ENCODE measurements at regions of chr10 and their contacts with region 1.

Region 1: GRCh38 chr10:12710594-12711349 is 290.7 kb downstream of the CCDC3 start:
- DNase-seq: peak; percentile 76
- ATAC-seq: peak; percentile 65
- H3K4me3 ChIP-seq: no peak overlapping the region
- H3K27ac ChIP-seq: no peak overlapping the region
- H3K4me1 ChIP-seq: peaks cover 40 to 55% of the 10 kb centered on the region in 2 experiments
- H3K27me3 ChIP-seq: no peaks in the 10 kb centered on the region
- CTCF ChIP-seq: peak; percentile 78 to 97 (median 96)
- POLR2A ChIP-seq: no peak
- RAD21 ChIP-seq: peak; percentile 93

Region 2: DNA sequence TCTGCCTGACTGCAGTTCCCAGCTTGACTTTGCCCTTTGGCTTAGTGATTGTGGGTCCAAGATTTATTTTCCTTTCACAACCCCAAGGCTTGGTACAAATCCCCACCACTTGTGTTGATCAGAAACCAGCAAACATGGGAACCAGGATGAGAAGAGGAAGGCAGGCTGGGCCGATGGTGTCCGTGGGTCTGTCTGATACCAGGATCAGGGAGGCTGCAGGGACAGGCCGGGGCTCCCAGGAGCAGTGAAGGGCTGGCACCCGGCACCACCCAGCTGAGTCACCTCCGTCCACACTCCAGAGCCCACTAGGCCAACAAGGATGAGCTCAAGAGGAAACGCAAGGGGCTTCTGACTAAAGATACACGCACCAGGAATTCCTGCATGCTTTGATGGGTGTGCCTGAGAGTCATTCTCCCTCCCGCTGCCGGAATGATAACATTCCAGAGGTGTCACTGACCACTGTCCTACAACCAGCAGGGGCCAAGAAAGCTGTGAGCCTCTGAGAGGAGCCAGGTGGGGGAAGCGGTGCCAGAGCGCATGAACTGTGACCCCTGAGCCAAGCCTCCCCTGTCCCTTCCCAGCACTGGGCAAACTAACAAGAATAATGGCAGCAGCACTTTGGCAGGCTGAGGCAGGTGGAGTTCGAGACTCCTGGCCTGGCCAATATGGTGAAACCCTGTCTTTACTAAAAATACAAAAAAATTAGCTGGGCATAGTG is 916.9 kb before region 1 on chr10:
- CTCF ChIA-PET with region 1: no interaction called
- POLR2A ChIA-PET with region 1: no interaction called
- RAD21 ChIA-PET with region 1: no interaction called
- intact Hi-C with region 1: loop called (anchors 10 kb)
- DNase-seq: peak; percentile 86
- ATAC-seq: peak; percentile 86
- H3K4me3 ChIP-seq: peak overlapping the region; percentile 5 to 42
- H3K27ac ChIP-seq: peak overlapping the region; percentile 68
- H3K4me1 ChIP-seq: peaks cover 14 to 45% of the 10 kb centered on the region in 2 experiments
- H3K27me3 ChIP-seq: no peaks in the 10 kb centered on the region
- CTCF ChIP-seq: no peak; a peak in 1 of 6 replicates
- POLR2A ChIP-seq: no peak
- RAD21 ChIP-seq: no peak; the same call in 1 of the 2 replicates

Region 3: GRCh38 chr10:12214763-12215218 is 496.0 kb before region 1 on chr10:
- CTCF ChIA-PET with region 1: interaction called, 9 read pairs
- POLR2A ChIA-PET with region 1: interaction called, 3 read pairs
- RAD21 ChIA-PET with region 1: interaction called in 1 of 2 experiments, 3 read pairs
- intact Hi-C with region 1: loop called (anchors 5 kb)
- DNase-seq: no peak
- ATAC-seq: no peak
- H3K4me3 ChIP-seq: no peak overlapping the region
- H3K27ac ChIP-seq: no peak overlapping the region
- H3K4me1 ChIP-seq: no peaks in the 10 kb centered on the region; a peak in 1 of 4 replicates
- H3K27me3 ChIP-seq: no peaks in the 10 kb centered on the region
- CTCF ChIP-seq: peak; percentile 48 to 83 (median 64); a peak in 5 of 6 replicates
- POLR2A ChIP-seq: no peak
- RAD21 ChIP-seq: peak; percentile 54

Region 4: DNA sequence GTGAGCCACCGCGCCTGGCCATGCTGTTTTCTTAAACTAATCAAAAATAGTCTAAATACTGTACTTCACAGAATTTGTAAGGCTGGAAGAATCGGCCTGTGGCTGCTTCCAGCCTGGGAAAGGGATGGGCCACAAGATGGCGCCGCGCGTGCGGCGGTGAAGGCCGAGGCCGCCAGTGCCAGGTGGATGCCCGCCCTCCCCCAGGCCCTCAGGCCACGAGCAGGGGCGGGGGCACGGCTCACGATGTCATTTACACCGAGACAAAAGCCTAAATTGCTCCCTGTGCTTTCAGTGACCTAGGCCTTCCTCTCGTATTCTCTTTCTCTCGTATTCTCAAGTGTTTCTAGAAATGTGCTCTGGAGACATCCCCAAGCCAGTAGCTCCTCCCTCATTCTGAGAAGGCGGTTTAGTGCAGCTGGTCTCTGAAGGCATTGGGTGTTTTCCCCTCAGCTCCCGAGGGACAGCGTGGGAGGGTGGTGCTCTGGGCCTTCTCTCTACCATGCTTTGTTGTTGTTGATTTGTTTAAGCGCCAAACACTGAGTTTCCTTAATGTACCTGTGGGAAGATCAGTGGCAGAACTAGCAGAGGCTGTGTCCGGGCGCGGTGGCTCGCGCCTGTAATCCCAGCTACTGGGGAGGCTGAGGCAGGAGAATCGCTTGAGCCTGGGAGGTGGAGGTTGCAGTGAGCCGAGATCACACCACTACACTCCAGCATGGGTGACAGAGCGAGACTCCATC is 446.4 kb before region 1 on chr10:
- CTCF ChIA-PET with region 1: interaction called, 32 read pairs
- POLR2A ChIA-PET with region 1: interaction called, 3 read pairs
- RAD21 ChIA-PET with region 1: interaction called in 1 of 2 experiments, 5 read pairs
- intact Hi-C with region 1: loop called (anchors 1 kb)
- DNase-seq: peak; percentile 60
- ATAC-seq: peak; percentile 97
- H3K4me3 ChIP-seq: peak overlapping the region in 1 of 2 experiments; percentile 33; a peak in 2 of 4 replicates
- H3K27ac ChIP-seq: no peak overlapping the region; the same call in 1 of the 2 replicates
- H3K4me1 ChIP-seq: peaks cover 8 to 17% of the 10 kb centered on the region in 2 experiments; a peak in 3 of 4 replicates
- H3K27me3 ChIP-seq: no peaks in the 10 kb centered on the region
- CTCF ChIP-seq: peak; percentile 69 to 87 (median 69)
- POLR2A ChIP-seq: no peak
- RAD21 ChIP-seq: peak; percentile 98

Region 5: GRCh38 chr10:12348870-12349628 is 361.7 kb before region 1 on chr10 and contains the start of gene CAMK1D:
- CTCF ChIA-PET with region 1: no interaction called
- POLR2A ChIA-PET with region 1: no interaction called
- RAD21 ChIA-PET with region 1: no interaction called
- intact Hi-C with region 1: loop called (anchors 5 kb)
- DNase-seq: no peak
- ATAC-seq: peak; percentile 72
- H3K4me3 ChIP-seq: peak within 1 kb of the TSS; percentile 70 to 88
- H3K27ac ChIP-seq: peak within 1 kb of the TSS; percentile 54; the same call in 1 of the 2 replicates
- H3K4me1 ChIP-seq: peaks cover 6 to 27% of the 10 kb centered on the region in 2 experiments; a peak in 3 of 4 replicates
- H3K27me3 ChIP-seq: no peaks in the 10 kb centered on the region
- CTCF ChIP-seq: peak in 1 of 3 experiments; percentile 28; a peak in 2 of 6 replicates
- POLR2A ChIP-seq: no peak
- RAD21 ChIP-seq: no peak
- total RNA-seq, gene CAMK1D: 9.6 TPM

Region 6: DNA sequence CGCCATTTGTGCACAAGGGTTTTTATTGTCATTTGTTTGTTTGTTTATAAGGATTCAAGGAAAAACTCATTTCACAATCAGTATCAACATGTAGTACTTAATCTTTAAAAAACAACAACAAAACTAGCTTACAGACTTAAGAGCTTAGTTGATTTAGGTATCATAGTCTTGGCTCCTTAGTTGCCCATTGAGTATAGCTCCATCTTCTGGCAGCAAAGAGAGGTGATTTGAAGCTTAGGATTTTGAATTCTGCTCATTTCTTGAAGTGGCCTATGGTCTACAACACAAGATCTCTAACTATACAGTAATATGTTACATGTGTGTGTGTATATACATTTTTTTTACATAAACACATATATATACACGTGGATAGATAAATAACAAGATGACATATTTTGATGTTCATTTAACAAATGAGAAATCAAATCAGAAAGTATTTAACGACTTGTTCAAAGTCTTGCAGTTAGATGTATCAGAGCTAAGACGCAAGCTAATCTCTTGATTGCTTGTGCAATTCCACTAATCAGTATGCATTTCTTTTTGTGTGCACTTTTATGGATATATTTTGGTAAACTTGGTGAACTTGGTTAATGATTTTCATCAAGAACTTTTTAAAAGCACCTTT is 54.1 kb before region 1 on chr10:
- CTCF ChIA-PET with region 1: interaction called, 14 read pairs
- POLR2A ChIA-PET with region 1: no interaction called
- RAD21 ChIA-PET with region 1: no interaction called
- intact Hi-C with region 1: no loop called
- DNase-seq: peak; percentile 48
- ATAC-seq: peak; percentile 77
- H3K4me3 ChIP-seq: no peak overlapping the region
- H3K27ac ChIP-seq: no peak overlapping the region
- H3K4me1 ChIP-seq: no peaks in the 10 kb centered on the region
- H3K27me3 ChIP-seq: no peaks in the 10 kb centered on the region
- CTCF ChIP-seq: peak; percentile 70 to 82 (median 80)
- POLR2A ChIP-seq: no peak
- RAD21 ChIP-seq: peak; percentile 83

Region 7: DNA sequence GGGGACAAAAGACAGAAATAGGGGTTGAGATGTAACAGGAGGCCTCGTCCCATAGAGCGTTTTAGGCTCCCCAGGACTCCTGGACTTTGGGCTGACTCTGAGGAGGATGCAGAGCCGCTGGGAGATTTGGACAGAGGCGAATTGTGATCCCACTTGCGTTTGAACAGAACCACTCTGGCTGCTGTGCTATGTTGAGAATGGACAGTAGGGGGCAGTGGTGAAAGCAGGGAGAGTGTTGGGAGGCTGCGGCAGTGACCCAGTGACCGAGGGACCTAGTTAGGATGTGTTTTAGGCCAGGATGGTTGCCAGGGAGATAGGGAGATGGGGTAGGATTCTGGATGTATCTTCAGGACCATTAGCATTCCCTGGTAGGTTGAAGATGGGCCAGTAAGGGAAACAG is 19.1 kb after region 1 on chr10:
- CTCF ChIA-PET with region 1: no interaction called
- POLR2A ChIA-PET with region 1: no interaction called
- RAD21 ChIA-PET with region 1: no interaction called
- intact Hi-C with region 1: no loop called
- DNase-seq: no peak
- ATAC-seq: peak; percentile 64
- H3K4me3 ChIP-seq: no peak overlapping the region
- H3K27ac ChIP-seq: no peak overlapping the region
- H3K4me1 ChIP-seq: peaks cover 16 to 23% of the 10 kb centered on the region in 2 experiments
- H3K27me3 ChIP-seq: peaks cover 7% of the 10 kb centered on the region; the same call in 1 of the 2 replicates
- CTCF ChIP-seq: peak; percentile 12 to 77 (median 75); a peak in 5 of 6 replicates
- POLR2A ChIP-seq: no peak
- RAD21 ChIP-seq: peak; percentile 33; the same call in 1 of the 2 replicates

Region 8: DNA sequence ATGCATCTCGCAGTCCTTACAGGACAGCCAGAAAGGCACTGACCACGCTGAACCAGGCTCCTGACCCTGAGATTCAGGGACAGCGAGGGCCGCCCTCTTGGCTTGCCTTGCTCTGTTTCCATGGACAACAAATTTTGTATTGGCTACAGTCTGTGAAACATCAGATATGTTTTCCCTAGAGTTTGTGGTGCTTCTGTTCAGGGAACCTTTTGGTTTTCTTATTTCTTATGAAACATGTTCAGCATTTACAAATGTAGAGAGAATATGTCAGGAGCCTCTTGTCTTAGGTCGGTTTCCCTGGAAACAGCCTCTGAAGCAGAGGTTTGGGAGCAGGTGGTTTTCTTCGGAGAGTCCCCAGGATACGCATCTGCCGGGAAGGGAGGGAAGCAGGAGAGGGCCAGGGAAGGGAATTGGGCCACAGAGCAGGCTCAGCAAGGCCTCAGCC is 30.6 kb after region 1 on chr10:
- CTCF ChIA-PET with region 1: no interaction called
- POLR2A ChIA-PET with region 1: no interaction called
- RAD21 ChIA-PET with region 1: no interaction called
- intact Hi-C with region 1: no loop called
- DNase-seq: no peak
- ATAC-seq: no peak
- H3K4me3 ChIP-seq: no peak overlapping the region
- H3K27ac ChIP-seq: no peak overlapping the region
- H3K4me1 ChIP-seq: no peaks in the 10 kb centered on the region
- H3K27me3 ChIP-seq: no peaks in the 10 kb centered on the region; the same call in 1 of the 2 replicates
- CTCF ChIP-seq: no peak
- POLR2A ChIP-seq: no peak
- RAD21 ChIP-seq: no peak

Region 9: GRCh38 chr10:13074561-13075451 is 364.0 kb after region 1 on chr10:
- CTCF ChIA-PET with region 1: interaction called, 7 read pairs
- POLR2A ChIA-PET with region 1: no interaction called
- RAD21 ChIA-PET with region 1: no interaction called
- intact Hi-C with region 1: loop called (anchors 2 kb)
- DNase-seq: peak; percentile 53
- ATAC-seq: peak; percentile 100
- H3K4me3 ChIP-seq: no peak overlapping the region
- H3K27ac ChIP-seq: no peak overlapping the region
- H3K4me1 ChIP-seq: 0 out of 4 replicates have a peak, but pooled peaks cover 0 to 4% of the 10 kb centered on the region in 2 experiments
- H3K27me3 ChIP-seq: no peaks in the 10 kb centered on the region
- CTCF ChIP-seq: peak; percentile 76 to 89 (median 82)
- POLR2A ChIP-seq: no peak
- RAD21 ChIP-seq: peak; percentile 93

Measured in HCT116 (cell line).